Breast epithelium (tissue), 4 donors: ENCODE measurements at regions of chr2 and their contacts with region 1.

Region 1: DNA sequence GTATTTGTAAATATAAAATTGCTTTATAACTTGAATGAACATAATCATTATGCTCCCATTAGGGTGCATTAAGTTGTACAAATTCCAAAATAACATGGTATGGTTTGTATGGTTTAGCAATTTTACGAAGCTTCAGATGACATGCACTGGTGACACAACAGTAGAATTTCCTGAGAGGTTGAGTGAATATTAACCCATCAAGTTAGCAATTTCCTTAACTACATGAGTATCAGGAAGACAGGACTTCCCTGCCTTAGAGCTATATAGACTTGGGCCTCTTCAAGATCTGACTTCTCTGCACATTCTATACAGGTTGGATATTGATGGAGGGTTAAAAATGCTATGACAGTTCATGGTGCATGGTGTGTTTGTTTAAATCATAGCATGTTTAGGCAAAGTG is 60.2 kb downstream of the ZC3H6 start:
- DNase-seq: no peak
- H3K4me3 ChIP-seq: no peak overlapping the region
- H3K27ac ChIP-seq: no peak overlapping the region
- H3K4me1 ChIP-seq: no peaks in the 10 kb centered on the region
- H3K27me3 ChIP-seq: no peaks in the 10 kb centered on the region
- CTCF ChIP-seq: no peak
- POLR2A ChIP-seq: no peak

Region 2: GRCh38 chr2:112275306-112275886 is 60.2 kb before region 1 on chr2 and contains the start of gene ZC3H6:
- intact Hi-C with region 1: loop called (anchors 2 kb)
- DNase-seq: peak; percentile 98 to 99
- H3K4me3 ChIP-seq: peak within 1 kb of the TSS; percentile 80 to 94 (median 85)
- H3K27ac ChIP-seq: peak within 1 kb of the TSS; percentile 100
- H3K4me1 ChIP-seq: no peaks in the 10 kb centered on the region
- H3K27me3 ChIP-seq: no peaks in the 10 kb centered on the region
- CTCF ChIP-seq: peak; percentile 18 to 53 (median 41)
- POLR2A ChIP-seq: peak; percentile 90
- total RNA-seq, gene ZC3H6: 14.4 to 20.3 (median 18.2) TPM

Region 3: DNA sequence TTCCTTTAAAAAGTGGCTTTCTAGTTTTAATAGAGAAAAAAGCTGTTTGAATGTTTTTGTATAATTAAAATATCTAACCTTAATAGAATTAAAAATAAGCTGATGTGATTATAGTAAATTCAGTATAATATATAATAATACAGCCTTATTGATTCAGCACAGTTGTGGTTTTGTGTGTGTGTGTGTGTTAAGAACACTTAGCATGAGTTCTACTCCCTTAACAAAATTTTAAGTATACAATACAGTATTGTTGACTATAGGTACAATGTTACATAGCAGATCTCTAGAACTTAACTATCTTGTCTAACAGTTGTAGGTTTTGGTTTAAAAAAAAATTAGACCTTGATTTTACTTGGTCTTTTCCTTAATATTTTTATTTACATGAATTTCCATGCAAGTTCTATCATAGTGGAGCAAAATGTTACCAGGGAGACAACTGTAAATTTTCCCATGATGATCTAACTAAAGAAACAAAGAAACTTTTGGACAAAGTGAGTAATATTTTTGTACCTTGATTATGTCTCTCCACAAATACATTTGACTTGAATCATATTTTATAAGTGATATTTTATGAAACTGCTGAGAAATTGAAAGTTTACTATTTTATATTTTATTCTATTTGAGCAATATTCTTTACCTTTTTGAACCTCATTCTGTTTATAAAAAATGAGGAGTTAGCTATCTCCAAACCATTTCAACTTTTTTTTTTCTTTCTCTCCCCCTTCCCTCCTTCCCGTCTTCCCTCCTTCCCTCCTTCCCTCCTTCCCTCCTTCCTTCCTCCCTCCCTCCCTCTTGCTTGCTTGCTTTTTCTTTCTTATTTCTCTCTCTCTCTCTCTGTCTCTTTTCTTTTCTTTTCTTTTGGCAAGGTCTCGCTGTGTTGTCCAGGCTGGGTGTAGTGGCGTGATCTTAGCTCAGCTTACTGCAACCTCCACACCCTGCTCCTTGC is 14.0 kb before region 1 on chr2:
- intact Hi-C with region 1: no loop called
- DNase-seq: no peak
- H3K4me3 ChIP-seq: no peak overlapping the region
- H3K27ac ChIP-seq: no peak overlapping the region
- H3K4me1 ChIP-seq: no peaks in the 10 kb centered on the region
- H3K27me3 ChIP-seq: no peaks in the 10 kb centered on the region
- CTCF ChIP-seq: no peak
- POLR2A ChIP-seq: no peak